ENCODE measurements at regions of chr10 and their contacts with region 1.

Region 1: DNA sequence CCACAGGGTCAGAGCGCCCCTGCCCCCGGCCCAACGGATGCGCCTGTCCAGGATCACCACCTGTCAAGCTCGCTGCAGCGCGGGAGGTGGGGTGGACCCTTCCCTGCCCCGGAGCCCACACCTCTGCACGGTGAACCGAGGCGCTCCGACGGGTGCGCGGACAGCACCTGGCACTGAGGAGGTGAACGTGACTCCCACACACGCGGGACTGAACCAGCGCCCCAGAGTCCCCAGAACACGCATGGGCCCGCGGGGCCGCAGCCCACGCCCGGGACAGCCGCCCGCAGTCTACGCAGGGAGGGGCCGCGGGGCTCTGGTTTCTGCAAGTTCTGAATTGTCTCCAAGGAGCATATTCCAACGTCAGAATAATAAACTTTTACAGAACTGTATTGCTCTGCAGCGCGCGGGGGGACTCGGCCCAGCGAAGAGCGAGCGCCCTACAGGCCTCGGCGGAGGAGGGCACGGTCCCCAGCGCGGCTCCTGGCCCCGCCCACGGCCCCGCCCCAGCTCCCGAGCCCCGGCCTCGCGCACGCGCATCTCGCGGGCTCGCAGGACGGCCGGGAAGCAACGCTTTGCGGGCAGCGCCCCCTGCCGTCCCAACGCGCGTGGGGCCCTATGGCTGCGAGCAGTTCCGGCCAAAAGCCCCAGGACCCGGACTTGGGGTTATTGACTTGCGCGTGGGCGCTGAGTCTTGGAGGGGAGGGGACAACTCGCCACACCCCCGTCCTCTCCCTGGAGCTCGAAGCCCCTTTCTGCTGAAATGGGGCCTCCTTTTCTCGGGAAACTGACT is 29.7 kb downstream of the OAT start:
- DNase-seq: peak; percentile 65
- ATAC-seq: peak; percentile 91
- H3K4me3 ChIP-seq: peak overlapping the region in 2 of 3 experiments; percentile 10 to 58; a peak in 3 of 6 replicates
- H3K27ac ChIP-seq: no peak overlapping the region
- H3K4me1 ChIP-seq: peaks cover 18% of the 10 kb centered on the region; the same call in 1 of the 2 replicates
- H3K27me3 ChIP-seq: peaks cover 3 to 38% of the 10 kb centered on the region in 2 experiments; a peak in 4 of 5 replicates
- CTCF ChIP-seq: peak; percentile 95
- EP300 ChIP-seq: no peak
- POLR2A ChIP-seq: no peak
- RAD21 ChIP-seq: peak; percentile 98

Region 2: DNA sequence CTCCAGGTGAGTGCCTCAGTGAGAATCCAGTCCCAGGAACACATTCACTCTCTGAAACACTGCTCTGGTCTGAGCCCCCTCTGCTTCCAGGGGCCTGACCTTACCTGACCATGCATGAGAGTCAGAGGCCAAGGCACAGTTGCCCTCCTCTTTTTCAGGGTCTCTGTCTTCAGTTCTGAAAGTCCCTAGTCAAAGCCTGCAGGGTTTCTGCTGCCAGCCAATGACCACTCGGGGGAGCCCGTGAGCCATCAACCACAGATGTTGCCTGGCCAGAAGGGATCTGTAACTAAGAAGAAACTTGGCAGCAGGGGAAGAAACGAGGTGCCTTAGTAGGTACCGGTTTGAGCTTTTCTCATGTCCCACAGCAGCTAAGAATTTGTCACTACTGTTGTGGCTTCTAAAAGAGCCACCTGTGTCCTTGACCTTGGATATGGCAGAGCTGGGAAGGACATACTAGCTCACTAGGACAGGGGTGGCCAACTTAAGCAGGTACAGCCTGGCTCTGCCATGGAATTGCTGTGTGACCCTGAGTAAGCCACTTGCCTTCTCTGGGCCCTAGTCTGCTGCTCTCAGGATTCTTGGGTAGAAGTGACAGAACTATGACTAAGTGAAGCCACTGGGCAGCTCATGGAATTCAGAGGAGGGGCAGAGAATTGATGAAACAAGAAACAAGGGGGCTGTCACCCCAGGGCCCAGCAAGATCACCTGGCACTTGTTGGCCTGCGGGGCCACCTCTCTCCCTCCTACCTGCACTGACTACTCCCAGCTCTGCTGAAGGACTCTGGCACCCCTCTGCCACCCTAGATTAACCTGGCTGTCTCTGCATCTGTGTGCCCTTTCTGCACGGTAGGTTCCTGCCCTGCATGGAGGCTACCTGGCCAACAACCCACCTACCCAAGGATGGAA is 806.7 kb before region 1 on chr10:
- CTCF ChIA-PET with region 1: no interaction called
- POLR2A ChIA-PET with region 1: no interaction called
- in situ Hi-C with region 1: loop called (anchors 10 kb)
- intact Hi-C with region 1: no loop called
- DNase-seq: peak; percentile 57
- ATAC-seq: peak; percentile 88
- H3K4me3 ChIP-seq: no peak overlapping the region
- H3K27ac ChIP-seq: no peak overlapping the region
- H3K4me1 ChIP-seq: peaks cover 7% of the 10 kb centered on the region; the same call in 1 of the 2 replicates
- H3K27me3 ChIP-seq: peaks cover 3 to 18% of the 10 kb centered on the region in 2 experiments; a peak in 3 of 5 replicates
- CTCF ChIP-seq: peak; percentile 89
- EP300 ChIP-seq: no peak
- POLR2A ChIP-seq: no peak
- RAD21 ChIP-seq: peak; percentile 69

Region 3: DNA sequence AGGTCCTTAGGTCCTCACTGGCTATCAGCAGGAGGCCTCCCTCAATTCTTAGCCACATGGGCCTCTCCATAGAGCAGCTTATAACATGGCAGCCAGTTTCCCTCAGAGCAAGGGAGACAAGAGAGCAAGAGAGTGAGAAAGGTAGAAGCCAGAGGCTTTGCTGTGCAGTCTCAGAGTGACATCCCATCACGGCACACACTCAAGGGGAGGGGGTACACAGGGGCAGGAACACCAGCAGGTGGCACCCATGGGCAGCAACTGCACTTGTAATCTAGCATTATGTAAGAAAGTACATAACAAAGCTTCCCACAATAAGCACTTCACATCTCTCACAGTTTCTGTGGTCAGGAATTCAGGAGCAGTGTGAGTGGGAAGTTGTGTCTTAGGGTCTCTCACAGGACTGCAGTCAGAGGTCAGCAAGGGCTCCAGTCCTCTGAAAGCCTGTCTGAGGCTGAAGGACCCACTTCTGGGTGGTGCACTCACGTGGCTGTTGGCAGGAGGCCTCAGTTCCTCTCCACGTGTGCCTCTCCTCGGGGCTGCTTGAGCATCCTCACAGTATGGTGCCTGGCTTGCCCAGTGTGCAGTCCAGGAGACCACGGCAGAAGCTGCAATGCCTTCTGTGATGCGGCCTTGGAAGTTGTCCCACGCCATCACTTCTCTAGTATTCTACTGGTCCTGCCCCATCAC is 129.7 kb before region 1 on chr10:
- CTCF ChIA-PET with region 1: interaction called, 9 read pairs
- POLR2A ChIA-PET with region 1: no interaction called
- in situ Hi-C with region 1: loop called (anchors 5 kb)
- intact Hi-C with region 1: loop called (anchors 1 kb)
- DNase-seq: peak; percentile 47
- ATAC-seq: peak; percentile 86
- H3K4me3 ChIP-seq: no peak overlapping the region
- H3K27ac ChIP-seq: no peak overlapping the region
- H3K4me1 ChIP-seq: no peaks in the 10 kb centered on the region
- H3K27me3 ChIP-seq: peaks cover 8 to 46% of the 10 kb centered on the region in 2 experiments
- CTCF ChIP-seq: peak; percentile 55
- EP300 ChIP-seq: no peak
- POLR2A ChIP-seq: no peak
- RAD21 ChIP-seq: peak; percentile 35; the same call in 1 of the 2 replicates

Region 4: DNA sequence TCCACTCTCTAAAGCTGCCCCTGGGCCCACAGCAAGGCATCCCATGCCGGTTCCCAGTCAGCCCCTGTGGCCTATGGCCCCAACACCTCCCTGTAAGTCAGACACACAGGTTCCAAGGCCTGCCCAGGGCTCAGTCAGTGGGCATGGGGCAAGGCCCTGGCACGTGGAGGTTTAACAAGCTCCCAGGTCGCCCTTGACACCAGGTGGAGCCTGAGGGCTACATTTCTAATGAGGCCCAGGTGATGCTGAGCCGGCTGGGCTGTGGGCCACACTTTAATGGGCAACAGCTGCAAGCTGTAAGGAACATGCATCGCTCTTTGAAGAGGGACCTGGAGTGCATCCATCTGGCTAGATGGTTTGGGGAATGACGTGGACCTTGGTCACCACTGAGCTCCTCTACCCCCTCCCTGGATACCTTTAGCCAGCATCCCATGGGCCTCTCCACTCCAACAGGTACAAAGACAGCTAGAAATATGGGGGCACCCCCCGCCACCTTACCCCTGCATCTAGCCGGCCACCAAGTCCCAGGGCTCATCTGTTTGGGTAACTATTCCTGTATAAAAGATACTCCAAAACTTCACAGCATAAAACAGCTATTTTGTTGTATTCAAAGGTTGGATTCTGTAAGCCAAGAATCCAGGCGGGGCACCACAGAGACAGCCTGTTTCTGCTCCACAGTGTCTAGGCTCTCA is 92.8 kb before region 1 on chr10:
- CTCF ChIA-PET with region 1: no interaction called
- POLR2A ChIA-PET with region 1: no interaction called
- in situ Hi-C with region 1: no loop called
- intact Hi-C with region 1: loop called (anchors 5 kb)
- DNase-seq: no peak
- ATAC-seq: peak; percentile 44; the same call in 2 of the 3 replicates
- H3K4me3 ChIP-seq: no peak overlapping the region
- H3K27ac ChIP-seq: no peak overlapping the region
- H3K4me1 ChIP-seq: no peaks in the 10 kb centered on the region
- H3K27me3 ChIP-seq: peaks cover 0 to 4% of the 10 kb centered on the region in 2 experiments; a peak in 2 of 5 replicates
- CTCF ChIP-seq: peak; percentile 25
- EP300 ChIP-seq: no peak
- POLR2A ChIP-seq: no peak
- RAD21 ChIP-seq: no peak